Activated CD4-positive, alpha-beta T cell treated with anti-CD3 and anti-CD28 coated beads, Interleukin-2, amount 10 ng/mL, durations not matched to agents 24 days and 14 days (primary cell): ENCODE measurements at regions of chr6 and their contacts with region 1.

Region 1: DNA sequence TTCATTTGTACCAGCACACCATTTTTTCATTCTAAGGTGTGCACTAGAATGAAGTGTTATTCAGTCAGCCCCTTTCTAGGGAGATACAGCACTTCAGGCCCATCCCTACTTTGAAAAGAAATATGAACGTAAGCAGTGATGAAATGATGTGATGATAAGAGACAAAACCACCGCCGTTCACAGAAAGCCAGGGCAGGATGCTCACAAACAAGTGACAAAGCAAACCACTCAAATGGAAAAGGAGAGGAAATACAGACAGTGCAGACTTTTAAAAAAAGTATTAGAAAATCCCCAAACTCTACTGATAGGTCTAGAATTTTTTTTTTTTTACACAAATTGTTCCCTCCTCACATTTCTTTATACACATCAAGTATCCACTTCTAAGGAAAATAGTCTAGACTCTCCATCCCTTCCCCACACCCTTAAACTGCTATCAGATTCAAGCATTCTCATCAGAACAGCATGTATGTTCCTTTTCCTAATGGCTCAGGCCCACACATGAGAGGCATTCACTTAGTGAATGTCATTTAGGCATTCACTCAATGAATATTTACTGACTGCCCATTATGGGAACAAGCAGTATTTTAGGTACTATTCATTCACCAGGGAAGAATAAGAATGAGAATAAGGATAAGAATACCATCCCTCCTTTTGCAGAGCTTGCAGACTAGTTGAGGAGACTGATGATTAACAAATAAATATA is 243.5 kb downstream of the GMPR start:
- DNase-seq: peak; percentile 92
- H3K4me3 Mint-ChIP-seq: peak overlapping the region; percentile 54
- H3K27ac Mint-ChIP-seq: peak overlapping the region; percentile 99
- H3K4me1 Mint-ChIP-seq: peaks cover 82% of the 10 kb centered on the region
- H3K27me3 Mint-ChIP-seq: no peaks in the 10 kb centered on the region

Region 2: GRCh38 chr6:16108921-16109658 is 372.8 kb before region 1 on chr6:
- intact Hi-C with region 1: no loop called
- DNase-seq: no peak
- H3K4me3 Mint-ChIP-seq: no peak overlapping the region
- H3K27ac Mint-ChIP-seq: no peak overlapping the region
- H3K4me1 Mint-ChIP-seq: no peaks in the 10 kb centered on the region
- H3K27me3 Mint-ChIP-seq: peaks cover 7% of the 10 kb centered on the region

Region 3: GRCh38 chr6:16128759-16129622 is 352.9 kb before region 1 on chr6 and contains the start of gene MYLIP:
- intact Hi-C with region 1: loop called (anchors 10 kb)
- DNase-seq: peak; percentile 98
- H3K4me3 Mint-ChIP-seq: peak within 1 kb of the TSS; percentile 91
- H3K27ac Mint-ChIP-seq: peak within 1 kb of the TSS; percentile 93
- H3K4me1 Mint-ChIP-seq: peaks cover 32% of the 10 kb centered on the region
- H3K27me3 Mint-ChIP-seq: peaks cover 20% of the 10 kb centered on the region
- total RNA-seq, gene MYLIP: 18.3 and 18.5 TPM in 2 replicates

Region 4: GRCh38 chr6:16437984-16438383 is 43.9 kb before region 1 on chr6:
- intact Hi-C with region 1: loop called (anchors 1 kb)
- DNase-seq: peak; percentile 67
- H3K4me3 Mint-ChIP-seq: peak overlapping the region; percentile 76
- H3K27ac Mint-ChIP-seq: peak overlapping the region; percentile 82
- H3K4me1 Mint-ChIP-seq: peaks cover 56% of the 10 kb centered on the region
- H3K27me3 Mint-ChIP-seq: no peaks in the 10 kb centered on the region

Region 5: DNA sequence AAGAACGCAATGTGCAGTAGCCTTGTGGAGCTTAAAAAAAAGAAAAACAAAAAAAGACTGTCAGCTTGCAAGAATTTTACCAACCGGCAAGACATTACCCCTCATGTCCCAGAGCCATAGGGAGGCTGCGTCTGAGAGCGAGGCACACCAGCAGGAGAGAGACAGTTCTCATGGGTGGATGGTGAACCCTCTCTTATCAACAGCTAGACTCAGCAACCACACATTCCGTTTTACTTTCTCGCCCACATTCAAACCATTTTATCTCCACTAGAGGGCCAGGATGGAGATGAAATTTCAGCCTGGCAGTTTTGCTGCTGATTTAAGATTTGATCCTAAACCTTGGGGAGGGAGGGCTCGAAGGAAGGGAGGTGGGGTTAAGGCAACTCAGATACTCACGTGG is 32.4 kb after region 1 on chr6:
- intact Hi-C with region 1: loop called (anchors 1 kb)
- DNase-seq: peak; percentile 82
- H3K4me3 Mint-ChIP-seq: peak overlapping the region; percentile 52
- H3K27ac Mint-ChIP-seq: peak overlapping the region; percentile 84
- H3K4me1 Mint-ChIP-seq: peaks cover 70% of the 10 kb centered on the region
- H3K27me3 Mint-ChIP-seq: no peaks in the 10 kb centered on the region

Region 6: GRCh38 chr6:16690608-16691198 is 208.9 kb after region 1 on chr6:
- intact Hi-C with region 1: loop called (anchors 2 kb)
- DNase-seq: peak; percentile 74
- H3K4me3 Mint-ChIP-seq: peak overlapping the region; percentile 81
- H3K27ac Mint-ChIP-seq: peak overlapping the region; percentile 99
- H3K4me1 Mint-ChIP-seq: peaks cover 73% of the 10 kb centered on the region
- H3K27me3 Mint-ChIP-seq: no peaks in the 10 kb centered on the region

Region 7: GRCh38 chr6:16741112-16742016 is 259.5 kb after region 1 on chr6:
- intact Hi-C with region 1: no loop called
- DNase-seq: no peak
- H3K4me3 Mint-ChIP-seq: no peak overlapping the region
- H3K27ac Mint-ChIP-seq: peak overlapping the region; percentile 56
- H3K4me1 Mint-ChIP-seq: peaks cover 62% of the 10 kb centered on the region
- H3K27me3 Mint-ChIP-seq: no peaks in the 10 kb centered on the region